ENCODE measurements at regions of chr11 and their contacts with region 1.

Region 1: DNA sequence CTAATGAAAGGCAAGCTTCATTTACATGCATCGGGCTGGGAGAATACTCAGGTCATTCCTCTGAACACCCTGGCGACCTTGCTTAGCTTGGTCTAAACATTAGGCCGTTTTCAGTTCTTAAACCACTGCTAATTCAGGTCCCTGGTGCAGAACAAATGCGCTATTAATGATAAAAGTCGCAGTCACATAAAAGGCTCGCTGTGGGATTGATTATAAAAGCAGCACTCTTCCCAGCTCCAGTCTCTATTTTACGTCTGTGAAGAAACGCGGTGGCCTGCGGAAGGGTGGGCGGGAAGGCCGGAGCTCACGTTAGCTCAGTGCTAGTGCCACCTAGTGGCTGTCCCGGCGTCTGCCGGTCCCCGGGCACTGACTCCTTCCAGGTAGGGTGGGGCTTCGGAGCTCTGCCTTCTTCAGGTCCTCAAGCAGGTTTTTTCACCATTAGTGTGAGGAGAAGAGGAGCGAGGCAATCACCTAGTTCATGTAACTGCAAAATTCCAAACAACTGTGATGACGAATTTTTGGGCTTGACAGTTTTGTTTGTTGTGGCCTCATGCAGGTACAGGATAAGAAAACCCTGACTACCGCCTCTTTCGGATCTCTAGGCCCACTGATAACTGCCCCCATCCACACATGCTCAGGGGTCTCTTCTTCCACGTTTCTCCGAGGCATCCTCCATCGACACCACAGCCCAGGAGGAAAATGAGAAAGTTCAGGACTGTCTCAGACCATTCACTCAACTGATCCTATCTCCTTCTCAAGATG is 66.5 kb upstream of the CLMP start:
- DNase-seq: peak; percentile 78
- ATAC-seq: peak; percentile 82
- H3K4me3 Mint-ChIP-seq: no peak overlapping the region
- H3K27ac Mint-ChIP-seq: no peak overlapping the region
- H3K4me1 Mint-ChIP-seq: peaks cover 16% of the 10 kb centered on the region
- H3K27me3 Mint-ChIP-seq: peaks cover 53% of the 10 kb centered on the region

Region 2: GRCh38 chr11:123103326-123103980 is 158.1 kb before region 1 on chr11:
- CTCF ChIA-PET with region 1: interaction called, 65 read pairs
- DNase-seq: peak; percentile 46
- ATAC-seq: peak; percentile 82
- H3K4me3 Mint-ChIP-seq: no peak overlapping the region
- H3K27ac Mint-ChIP-seq: no peak overlapping the region
- H3K4me1 Mint-ChIP-seq: peaks cover 4% of the 10 kb centered on the region
- H3K27me3 Mint-ChIP-seq: peaks cover 4% of the 10 kb centered on the region

Region 3: DNA sequence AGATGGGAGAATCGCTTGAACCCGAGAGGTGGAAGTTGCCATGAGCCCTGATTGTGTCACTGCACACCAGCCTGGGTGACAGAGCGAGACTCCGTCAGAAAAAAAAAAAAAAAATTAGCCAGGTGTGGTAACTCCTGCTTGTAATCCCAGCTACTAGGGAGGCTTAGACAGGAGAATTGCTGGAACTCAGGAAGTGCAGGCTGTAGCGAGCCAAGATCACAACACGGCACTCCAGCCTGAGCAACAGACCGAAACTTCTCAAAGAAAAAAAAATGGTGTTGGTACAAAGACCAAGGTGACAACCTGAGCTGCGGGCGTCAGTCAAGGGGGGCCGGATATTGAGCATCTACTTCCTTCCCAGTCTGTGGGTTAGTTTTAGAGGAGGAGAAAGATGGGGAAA is 151.2 kb before region 1 on chr11:
- CTCF ChIA-PET with region 1: interaction called, 65 read pairs
- DNase-seq: no peak
- ATAC-seq: no peak
- H3K4me3 Mint-ChIP-seq: no peak overlapping the region
- H3K27ac Mint-ChIP-seq: no peak overlapping the region
- H3K4me1 Mint-ChIP-seq: no peaks in the 10 kb centered on the region
- H3K27me3 Mint-ChIP-seq: peaks cover 11% of the 10 kb centered on the region

Region 4: GRCh38 chr11:123137431-123138224 is 123.9 kb before region 1 on chr11:
- CTCF ChIA-PET with region 1: no interaction called
- DNase-seq: no peak
- ATAC-seq: no peak
- H3K4me3 Mint-ChIP-seq: no peak overlapping the region
- H3K27ac Mint-ChIP-seq: no peak overlapping the region
- H3K4me1 Mint-ChIP-seq: no peaks in the 10 kb centered on the region
- H3K27me3 Mint-ChIP-seq: peaks cover 6% of the 10 kb centered on the region

Region 5: DNA sequence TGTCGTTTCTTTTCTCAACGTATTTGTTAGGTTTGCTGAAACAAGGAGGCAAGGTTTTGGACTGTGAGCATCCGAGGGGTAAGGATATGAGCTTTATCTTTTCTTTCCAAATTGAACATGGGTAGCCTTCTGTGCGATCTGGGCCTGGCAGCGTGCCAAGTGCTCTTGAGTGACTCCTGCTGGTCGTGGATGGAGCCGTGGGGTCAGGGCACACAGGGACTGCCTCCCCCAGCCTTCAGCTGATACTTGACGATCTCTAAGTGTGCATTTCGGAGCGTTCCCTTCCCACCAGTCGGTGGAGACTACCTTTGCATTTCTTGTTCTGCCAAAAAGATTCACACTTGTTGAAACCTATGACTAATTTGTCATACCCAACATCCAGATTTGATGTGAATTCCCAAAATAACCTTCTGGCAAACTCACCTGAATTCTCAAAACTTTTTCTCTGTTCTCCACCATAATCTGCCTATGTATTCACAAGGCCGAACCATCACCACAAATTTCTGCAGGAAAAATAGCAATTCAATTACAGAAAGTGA is 26.3 kb before region 1 on chr11:
- CTCF ChIA-PET with region 1: interaction called, 13 read pairs
- DNase-seq: no peak
- ATAC-seq: no peak
- H3K4me3 Mint-ChIP-seq: no peak overlapping the region
- H3K27ac Mint-ChIP-seq: no peak overlapping the region
- H3K4me1 Mint-ChIP-seq: peaks cover 35% of the 10 kb centered on the region
- H3K27me3 Mint-ChIP-seq: peaks cover 10% of the 10 kb centered on the region

Region 6: DNA sequence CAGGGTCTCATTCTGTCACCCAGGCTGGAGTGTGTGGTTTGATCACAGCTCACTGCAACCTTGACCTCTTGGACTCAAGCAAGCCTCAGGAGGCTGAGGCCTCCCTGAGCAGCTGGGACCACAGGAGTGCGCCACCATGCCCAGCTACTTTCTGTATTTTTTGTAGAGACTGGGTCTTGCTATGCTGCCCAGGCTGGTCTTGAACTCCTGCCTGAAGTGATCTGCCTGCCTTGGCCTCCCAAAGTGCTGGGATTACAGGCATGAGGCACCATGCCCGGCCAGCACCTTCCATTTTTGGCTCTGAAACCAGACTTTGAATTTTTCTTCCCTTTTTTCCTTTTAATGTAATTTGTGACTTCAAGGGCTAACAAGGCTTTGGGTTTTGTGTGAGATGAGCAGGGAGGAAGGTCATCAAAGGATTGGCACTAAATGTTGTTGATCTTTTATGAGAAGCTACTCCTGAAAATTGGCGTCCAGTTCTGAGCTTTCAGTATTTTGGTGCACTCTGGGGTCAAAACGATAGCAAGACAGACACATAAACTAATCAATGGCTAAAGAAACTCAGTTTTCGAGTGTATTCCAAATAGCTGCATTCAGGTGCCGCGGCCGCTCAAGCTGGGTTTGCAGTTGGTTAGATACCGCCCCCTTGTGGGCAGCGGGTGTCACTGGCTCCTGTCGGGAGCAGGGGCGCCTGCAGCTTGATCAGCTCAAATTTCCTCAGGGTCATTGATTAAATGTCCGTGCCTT is 14.6 kb before region 1 on chr11:
- CTCF ChIA-PET with region 1: interaction called, 59 read pairs
- DNase-seq: peak; percentile 89
- ATAC-seq: peak; percentile 92
- H3K4me3 Mint-ChIP-seq: no peak overlapping the region
- H3K27ac Mint-ChIP-seq: peak overlapping the region; percentile 18
- H3K4me1 Mint-ChIP-seq: peaks cover 9% of the 10 kb centered on the region
- H3K27me3 Mint-ChIP-seq: peaks cover 35% of the 10 kb centered on the region

Region 7: GRCh38 chr11:123301696-123302400 is 40.3 kb after region 1 on chr11:
- CTCF ChIA-PET with region 1: interaction called, 12 read pairs
- DNase-seq: peak; percentile 78
- ATAC-seq: peak; percentile 91
- H3K4me3 Mint-ChIP-seq: peak overlapping the region; percentile 49
- H3K27ac Mint-ChIP-seq: peak overlapping the region; percentile 61
- H3K4me1 Mint-ChIP-seq: peaks cover 54% of the 10 kb centered on the region
- H3K27me3 Mint-ChIP-seq: no peaks in the 10 kb centered on the region

Measured in activated CD8-positive, alpha-beta memory T cell treated with anti-CD3 and anti-CD28 coated beads, Interleukin-2, amount 10 ng/mL, durations not matched to agents 7 days and 5 days (primary cell).